IMR-90 (cell line): ENCODE measurements at regions of chr11 and their contacts with region 1.

Region 1: GRCh38 chr11:102139081-102139498 is 28.8 kb downstream of the YAP1 start:
- DNase-seq: peak; percentile 93
- ATAC-seq: peak; percentile 83
- H3K4me3 ChIP-seq: peak overlapping the region; percentile 15; the same call in 1 of the 2 replicates
- H3K27ac ChIP-seq: peak overlapping the region; percentile 57
- H3K4me1 ChIP-seq: peaks cover 19% of the 10 kb centered on the region
- H3K27me3 ChIP-seq: no peaks in the 10 kb centered on the region
- CTCF ChIP-seq: no peak
- POLR2A ChIP-seq: no peak
- RAD21 ChIP-seq: no peak

Region 2: DNA sequence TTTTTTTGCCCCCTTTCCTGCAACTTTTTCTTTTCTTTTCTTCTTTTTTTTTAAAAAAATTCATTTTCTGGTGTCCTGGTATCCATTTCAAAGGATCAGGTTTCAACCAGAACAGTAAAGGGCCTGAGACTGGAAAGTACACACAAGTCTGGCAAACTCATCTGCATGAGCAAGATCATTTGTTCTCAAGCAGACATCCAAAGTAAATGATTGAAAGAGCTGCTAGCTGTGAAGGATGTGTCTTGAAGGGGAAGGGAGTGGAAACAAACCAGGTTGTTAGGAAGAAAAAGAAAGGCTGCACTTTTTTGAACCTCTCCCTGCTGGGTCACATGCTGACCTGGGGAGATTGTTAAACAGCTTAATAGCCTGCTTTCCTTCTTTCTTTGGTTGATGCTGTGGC is 23.5 kb before region 1 on chr11:
- CTCF ChIA-PET with region 1: interaction called, 3 read pairs
- POLR2A ChIA-PET with region 1: no interaction called
- dilution Hi-C with region 1: no loop called
- in situ Hi-C with region 1: no loop called
- intact Hi-C with region 1: loop called (anchors 2 kb)
- DNase-seq: peak; percentile 79
- ATAC-seq: no peak
- H3K4me3 ChIP-seq: no peak overlapping the region
- H3K27ac ChIP-seq: peak overlapping the region; percentile 70; the same call in 1 of the 2 replicates
- H3K4me1 ChIP-seq: peaks cover 14% of the 10 kb centered on the region
- H3K27me3 ChIP-seq: no peaks in the 10 kb centered on the region
- CTCF ChIP-seq: no peak
- POLR2A ChIP-seq: no peak
- RAD21 ChIP-seq: no peak

Region 3: GRCh38 chr11:102225689-102226568 is 86.8 kb after region 1 on chr11:
- CTCF ChIA-PET with region 1: no interaction called
- POLR2A ChIA-PET with region 1: no interaction called
- dilution Hi-C with region 1: no loop called
- in situ Hi-C with region 1: no loop called
- intact Hi-C with region 1: loop called (anchors 5 kb)
- DNase-seq: peak; percentile 97
- ATAC-seq: peak; percentile 91
- H3K4me3 ChIP-seq: peak overlapping the region; percentile 11; the same call in 1 of the 2 replicates
- H3K27ac ChIP-seq: peak overlapping the region; percentile 42; the same call in 1 of the 2 replicates
- H3K4me1 ChIP-seq: peaks cover 18% of the 10 kb centered on the region
- H3K27me3 ChIP-seq: no peaks in the 10 kb centered on the region
- CTCF ChIP-seq: no peak
- POLR2A ChIP-seq: peak; percentile 50; the same call in 1 of the 2 replicates
- RAD21 ChIP-seq: peak; percentile 1; the same call in 1 of the 2 replicates

Region 4: GRCh38 chr11:102287964-102288724 is 149.1 kb after region 1 on chr11:
- CTCF ChIA-PET with region 1: no interaction called
- POLR2A ChIA-PET with region 1: no interaction called
- dilution Hi-C with region 1: no loop called
- in situ Hi-C with region 1: no loop called
- intact Hi-C with region 1: no loop called
- DNase-seq: peak; percentile 82
- ATAC-seq: peak; percentile 85
- H3K4me3 ChIP-seq: no peak overlapping the region
- H3K27ac ChIP-seq: no peak overlapping the region
- H3K4me1 ChIP-seq: peaks cover 5% of the 10 kb centered on the region
- H3K27me3 ChIP-seq: no peaks in the 10 kb centered on the region
- CTCF ChIP-seq: peak; percentile 81
- POLR2A ChIP-seq: no peak
- RAD21 ChIP-seq: peak; percentile 79

Region 5: GRCh38 chr11:103035791-103036434 is 896.8 kb after region 1 on chr11:
- CTCF ChIA-PET with region 1: no interaction called
- POLR2A ChIA-PET with region 1: no interaction called
- dilution Hi-C with region 1: no loop called
- in situ Hi-C with region 1: no loop called
- intact Hi-C with region 1: no loop called
- DNase-seq: peak; percentile 86
- ATAC-seq: peak; percentile 91
- H3K4me3 ChIP-seq: no peak overlapping the region
- H3K27ac ChIP-seq: no peak overlapping the region
- H3K4me1 ChIP-seq: no peaks in the 10 kb centered on the region
- H3K27me3 ChIP-seq: no peaks in the 10 kb centered on the region
- CTCF ChIP-seq: peak; percentile 62
- POLR2A ChIP-seq: no peak
- RAD21 ChIP-seq: peak; percentile 38; the same call in 1 of the 2 replicates